Pancreas (tissue), 10 donors: ENCODE measurements at regions of chr21 and their contacts with region 1.

Region 1: GRCh38 chr21:29372063-29372802 is 73.5 kb downstream of the BACH1 start:
- DNase-seq: peak in 3 of 6 donors; percentile 25 to 56 (median 44)
- ATAC-seq: peak; percentile 87 to 97 (median 93)
- H3K4me3 ChIP-seq: no peak overlapping the region
- H3K27ac ChIP-seq: no peak overlapping the region
- H3K4me1 ChIP-seq: no peaks in the 10 kb centered on the region
- H3K27me3 ChIP-seq: no peaks in the 10 kb centered on the region
- CTCF ChIP-seq: peak; percentile 47 to 76 (median 63)

Region 2: GRCh38 chr21:29091032-29091431 is 281.2 kb before region 1 on chr21:
- intact Hi-C with region 1: loop called in 2 of 3 experiments (anchors 10 kb)
- DNase-seq: no peak
- ATAC-seq: peak in 1 of 4 donors; percentile 12
- H3K4me3 ChIP-seq: no peak overlapping the region
- H3K27ac ChIP-seq: no peak overlapping the region
- H3K4me1 ChIP-seq: peaks cover 0 to 4% (median 0%) of the 10 kb centered on the region in 3 donors
- H3K27me3 ChIP-seq: no peaks in the 10 kb centered on the region
- CTCF ChIP-seq: no peak